Panc1 (cell line): ENCODE measurements at regions of chr7 and their contacts with region 1.

Region 1: DNA sequence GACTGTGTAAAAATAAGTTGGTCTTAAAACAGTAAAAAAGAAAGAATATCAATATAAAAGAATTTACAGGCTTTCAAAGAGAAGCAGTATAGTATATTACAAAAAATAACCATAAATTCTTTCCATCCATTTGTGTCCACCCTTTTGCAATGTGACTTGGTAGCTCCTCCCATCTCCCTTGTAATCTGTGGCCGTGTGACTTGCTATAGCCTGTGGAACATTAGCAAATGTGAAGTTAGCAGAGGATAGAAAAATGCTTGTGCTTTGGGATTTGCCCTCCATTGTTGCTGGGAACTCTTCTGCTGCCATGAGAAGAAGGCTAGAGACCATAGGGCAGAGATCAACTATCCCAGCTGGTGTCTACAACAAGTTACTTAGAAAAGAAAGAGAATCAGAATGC is 30.2 kb downstream of the KLHL7 start:
- DNase-seq: no peak
- ATAC-seq: no peak
- H3K4me3 ChIP-seq: no peak overlapping the region
- H3K27ac ChIP-seq: no peak overlapping the region
- H3K4me1 ChIP-seq: no peaks in the 10 kb centered on the region
- H3K27me3 ChIP-seq: no peaks in the 10 kb centered on the region
- CTCF ChIP-seq: no peak

Region 2: DNA sequence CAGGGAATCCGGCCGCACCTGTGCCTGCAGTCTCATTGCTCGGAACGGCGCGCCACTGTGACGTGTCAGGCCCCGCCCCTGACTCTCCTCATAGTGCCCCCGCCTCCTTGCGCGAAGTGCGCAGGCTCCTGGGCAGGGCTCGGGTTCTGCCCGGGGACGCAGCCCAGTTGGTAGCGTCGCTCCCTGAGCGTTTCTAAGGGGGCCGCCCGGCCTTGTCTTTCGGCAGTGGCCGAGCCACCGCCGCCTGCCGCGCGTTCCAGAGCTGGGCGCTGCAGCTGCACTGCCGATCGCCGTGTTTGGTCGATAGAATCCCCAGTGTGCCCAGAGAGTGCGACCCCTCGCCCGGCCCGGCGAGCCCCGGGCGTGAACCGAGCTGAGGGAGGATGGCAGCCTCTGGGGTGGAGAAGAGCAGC is 30.1 kb before region 1 on chr7 and contains the start of gene KLHL7:
- CTCF ChIA-PET with region 1: no interaction called
- POLR2A ChIA-PET with region 1: interaction called, 10 read pairs
- in situ Hi-C with region 1: no loop called
- intact Hi-C with region 1: no loop called
- DNase-seq: peak; percentile 78
- ATAC-seq: peak; percentile 99
- H3K4me3 ChIP-seq: peak within 1 kb of the TSS; percentile 96 to 98
- H3K27ac ChIP-seq: peak within 1 kb of the TSS; percentile 93
- H3K4me1 ChIP-seq: peaks cover 17% of the 10 kb centered on the region
- H3K27me3 ChIP-seq: no peaks in the 10 kb centered on the region
- CTCF ChIP-seq: no peak
- total RNA-seq, gene KLHL7: 33.8 TPM

Region 3: GRCh38 chr7:23175938-23176337 is 40.2 kb after region 1 on chr7:
- CTCF ChIA-PET with region 1: interaction called, 10 read pairs
- POLR2A ChIA-PET with region 1: no interaction called
- in situ Hi-C with region 1: no loop called
- intact Hi-C with region 1: no loop called
- DNase-seq: no peak
- ATAC-seq: no peak
- H3K4me3 ChIP-seq: no peak overlapping the region
- H3K27ac ChIP-seq: no peak overlapping the region
- H3K4me1 ChIP-seq: no peaks in the 10 kb centered on the region; the same call in 1 of the 2 replicates
- H3K27me3 ChIP-seq: no peaks in the 10 kb centered on the region
- CTCF ChIP-seq: no peak

Region 4: GRCh38 chr7:24812310-24812945 is 1676.7 kb after region 1 on chr7:
- CTCF ChIA-PET with region 1: no interaction called
- POLR2A ChIA-PET with region 1: no interaction called
- in situ Hi-C with region 1: no loop called
- intact Hi-C with region 1: no loop called
- DNase-seq: peak; percentile 66
- ATAC-seq: peak; percentile 96
- H3K4me3 ChIP-seq: no peak overlapping the region
- H3K27ac ChIP-seq: no peak overlapping the region
- H3K4me1 ChIP-seq: no peaks in the 10 kb centered on the region
- H3K27me3 ChIP-seq: no peaks in the 10 kb centered on the region
- CTCF ChIP-seq: peak; percentile 97